A549 (cell line): ENCODE measurements at regions of chr14 and their contacts with region 1.

Region 1: GRCh38 chr14:96297000-96297399 is 41.0 kb downstream of the BDKRB1 start:
- DNase-seq: peak in 1 of 2 experiments; percentile 37
- ATAC-seq: peak in 1 of 2 experiments; percentile 71; a peak in 3 of 6 replicates
- H3K4me3 ChIP-seq: no peak overlapping the region
- H3K27ac ChIP-seq: no peak overlapping the region
- H3K4me1 ChIP-seq: 0 out of 3 replicates have a peak, but pooled peaks cover 3% of the 10 kb centered on the region
- CTCF ChIP-seq: peak; percentile 63; the same call in 2 of the 3 replicates
- EP300 ChIP-seq: no peak
- POLR2A ChIP-seq: no peak
- RAD21 ChIP-seq: peak; percentile 67 to 74

Region 2: GRCh38 chr14:96086041-96086440 is 211.0 kb before region 1 on chr14:
- CTCF ChIA-PET with region 1: no interaction called
- POLR2A ChIA-PET with region 1: no interaction called
- DNase-seq: peak; percentile 42 to 52
- ATAC-seq: peak; percentile 51 to 69; a peak in 3 of 6 replicates
- H3K4me3 ChIP-seq: no peak overlapping the region
- H3K27ac ChIP-seq: peak overlapping the region in 1 of 2 experiments; percentile 59; a peak in 5 of 6 replicates
- H3K4me1 ChIP-seq: peaks cover 22% of the 10 kb centered on the region
- CTCF ChIP-seq: no peak
- EP300 ChIP-seq: no peak
- POLR2A ChIP-seq: no peak
- RAD21 ChIP-seq: no peak

Region 3: GRCh38 chr14:96285667-96286066 is 11.3 kb before region 1 on chr14:
- CTCF ChIA-PET with region 1: interaction called, 28 read pairs
- POLR2A ChIA-PET with region 1: no interaction called
- DNase-seq: no peak
- ATAC-seq: no peak
- H3K4me3 ChIP-seq: no peak overlapping the region
- H3K27ac ChIP-seq: no peak overlapping the region
- H3K4me1 ChIP-seq: peaks cover 10% of the 10 kb centered on the region
- CTCF ChIP-seq: no peak
- EP300 ChIP-seq: no peak
- POLR2A ChIP-seq: no peak
- RAD21 ChIP-seq: no peak

Region 4: DNA sequence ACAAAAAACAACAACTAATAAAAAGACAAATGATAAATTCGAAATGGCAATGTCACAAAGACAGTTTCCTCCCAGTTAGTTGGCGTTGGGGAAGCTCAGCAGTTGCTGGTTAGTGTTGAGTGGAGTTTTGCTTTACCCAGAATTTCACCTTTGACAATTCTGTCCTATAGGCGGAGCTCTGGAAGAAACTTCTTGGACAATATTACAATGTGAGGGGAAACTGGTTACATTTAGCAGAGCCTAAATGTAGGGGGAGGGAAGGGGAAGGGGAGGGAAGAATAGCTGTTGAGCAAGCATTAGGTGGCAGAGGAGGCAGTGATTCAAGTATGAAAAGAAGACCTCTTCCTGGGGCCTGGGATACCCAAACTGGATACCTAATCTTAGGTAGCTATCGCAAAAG is 10.4 kb after region 1 on chr14:
- CTCF ChIA-PET with region 1: interaction called, 23 read pairs
- POLR2A ChIA-PET with region 1: no interaction called
- DNase-seq: peak; percentile 18 to 39
- ATAC-seq: peak; percentile 59 to 62; a peak in 4 of 6 replicates
- H3K4me3 ChIP-seq: no peak overlapping the region
- H3K27ac ChIP-seq: peak overlapping the region in 1 of 2 experiments; percentile 13; a peak in 1 of 6 replicates
- H3K4me1 ChIP-seq: peaks cover 47% of the 10 kb centered on the region
- CTCF ChIP-seq: peak; percentile 33; the same call in 1 of the 3 replicates
- EP300 ChIP-seq: no peak
- POLR2A ChIP-seq: no peak
- RAD21 ChIP-seq: no peak

Region 5: DNA sequence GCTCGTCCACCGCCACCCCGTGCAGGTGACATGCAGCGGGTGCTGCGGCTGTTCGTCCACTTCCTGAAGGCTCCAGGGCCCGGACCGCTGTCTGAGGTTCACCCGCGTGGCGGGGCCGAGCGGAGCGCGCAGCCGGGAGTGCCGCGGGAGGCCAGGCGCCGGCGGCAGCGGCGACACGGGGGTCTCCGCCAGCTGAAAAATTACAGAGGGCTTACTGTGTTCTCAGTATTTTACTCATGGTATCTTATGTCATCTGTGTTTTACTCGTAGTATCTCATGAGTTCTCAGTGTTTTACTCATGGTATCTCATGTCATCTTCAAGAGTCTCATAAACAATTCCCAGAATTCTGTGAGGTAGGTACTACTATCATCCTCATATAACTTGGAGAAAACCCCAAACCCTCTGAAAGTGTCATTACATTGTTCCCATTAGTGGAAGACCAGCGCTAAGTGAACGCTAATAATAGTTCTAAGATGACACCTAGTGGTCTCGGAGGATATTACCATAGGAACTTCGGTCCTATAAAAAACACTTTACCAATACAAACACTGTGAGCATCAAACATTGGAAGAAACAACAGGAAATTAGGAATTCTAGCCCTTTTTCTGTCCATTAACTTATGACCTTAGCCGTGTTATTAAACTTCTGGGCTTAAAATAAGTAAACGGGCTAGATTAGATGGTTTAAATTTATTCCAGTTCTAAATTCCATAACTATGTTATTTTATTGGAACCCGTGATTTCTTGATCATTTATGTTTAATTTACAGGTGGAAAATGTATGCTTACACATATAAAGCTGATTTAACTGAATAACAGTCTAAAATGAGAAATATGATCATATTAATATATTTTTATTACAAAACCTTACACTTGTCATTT is 127.3 kb after region 1 on chr14:
- CTCF ChIA-PET with region 1: interaction called, 26 read pairs
- POLR2A ChIA-PET with region 1: interaction called, 3 read pairs
- DNase-seq: peak; percentile 57 to 74
- ATAC-seq: peak; percentile 90 to 93
- H3K4me3 ChIP-seq: peak overlapping the region; percentile 41
- H3K27ac ChIP-seq: peak overlapping the region; percentile 22 to 75; a peak in 3 of 6 replicates
- H3K4me1 ChIP-seq: no peaks in the 10 kb centered on the region
- CTCF ChIP-seq: peak; percentile 90
- EP300 ChIP-seq: no peak
- POLR2A ChIP-seq: no peak
- RAD21 ChIP-seq: peak; percentile 92 to 94